ENCODE measurements at regions of chr9 and their contacts with region 1.

Region 1: GRCh38 chr9:33473643-33474352 is at the start of gene NOL6:
- DNase-seq: peak; percentile 99
- ATAC-seq: peak; percentile 100
- H3K4me3 ChIP-seq: peak within 1 kb of the TSS; percentile 96
- H3K27ac ChIP-seq: peak within 1 kb of the TSS; percentile 54
- H3K4me1 ChIP-seq: peaks cover 7% of the 10 kb centered on the region
- H3K27me3 ChIP-seq: no peaks in the 10 kb centered on the region
- CTCF ChIP-seq: no peak
- EP300 ChIP-seq: no peak
- POLR2A ChIP-seq: peak; percentile 84
- RAD21 ChIP-seq: no peak
- polyA plus RNA-seq, gene NOL6: 8.3 to 13.2 TPM

Region 2: GRCh38 chr9:33458444-33458843 is 15.4 kb before region 1 on chr9:
- CTCF ChIA-PET with region 1: interaction called, 154 read pairs
- POLR2A ChIA-PET with region 1: interaction called, 12 read pairs
- RAD21 ChIA-PET with region 1: interaction called, 10 read pairs
- SMC1A ChIA-PET with region 1: interaction called, 20 read pairs
- in situ Hi-C with region 1: no loop called
- intact Hi-C with region 1: no loop called
- DNase-seq: peak; percentile 32
- ATAC-seq: peak; percentile 72
- H3K4me3 ChIP-seq: 0 out of 2 replicates have a peak overlapping the region, but pooled peaks have one; percentile 8
- H3K27ac ChIP-seq: no peak overlapping the region
- H3K4me1 ChIP-seq: peaks cover 34% of the 10 kb centered on the region
- H3K27me3 ChIP-seq: no peaks in the 10 kb centered on the region
- CTCF ChIP-seq: no peak
- EP300 ChIP-seq: no peak
- POLR2A ChIP-seq: no peak
- RAD21 ChIP-seq: no peak

Region 3: DNA sequence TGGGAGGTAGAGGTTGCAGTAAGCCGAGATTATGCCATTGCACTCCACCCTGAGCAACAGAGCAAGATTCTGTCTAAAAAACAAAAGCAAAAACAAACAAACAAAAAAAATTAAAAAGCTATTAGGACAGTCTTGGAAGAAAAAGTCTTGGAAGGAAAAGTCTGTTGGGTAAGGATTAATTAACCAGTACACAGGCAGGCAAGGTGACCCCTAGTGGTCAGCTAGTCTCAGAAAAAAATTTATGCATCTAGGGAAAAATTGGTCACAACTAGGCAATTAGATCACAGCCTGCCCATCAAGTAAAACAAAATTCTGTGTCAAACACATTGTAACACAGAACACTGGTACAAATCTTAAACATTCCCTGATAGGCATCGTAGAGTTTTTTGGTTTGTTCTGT is 43.6 kb after region 1 on chr9:
- CTCF ChIA-PET with region 1: no interaction called
- POLR2A ChIA-PET with region 1: no interaction called
- RAD21 ChIA-PET with region 1: no interaction called
- SMC1A ChIA-PET with region 1: no interaction called
- in situ Hi-C with region 1: no loop called
- intact Hi-C with region 1: no loop called
- DNase-seq: no peak
- ATAC-seq: peak; percentile 70
- H3K4me3 ChIP-seq: no peak overlapping the region
- H3K27ac ChIP-seq: no peak overlapping the region
- H3K4me1 ChIP-seq: no peaks in the 10 kb centered on the region
- H3K27me3 ChIP-seq: no peaks in the 10 kb centered on the region
- CTCF ChIP-seq: peak; percentile 45 to 50 (median 45)
- EP300 ChIP-seq: no peak
- POLR2A ChIP-seq: no peak
- RAD21 ChIP-seq: no peak

Measured in GM12878 (cell line).